HEK293 (cell line): ENCODE measurements at regions of chr3 and their contacts with region 1.

Region 1: DNA sequence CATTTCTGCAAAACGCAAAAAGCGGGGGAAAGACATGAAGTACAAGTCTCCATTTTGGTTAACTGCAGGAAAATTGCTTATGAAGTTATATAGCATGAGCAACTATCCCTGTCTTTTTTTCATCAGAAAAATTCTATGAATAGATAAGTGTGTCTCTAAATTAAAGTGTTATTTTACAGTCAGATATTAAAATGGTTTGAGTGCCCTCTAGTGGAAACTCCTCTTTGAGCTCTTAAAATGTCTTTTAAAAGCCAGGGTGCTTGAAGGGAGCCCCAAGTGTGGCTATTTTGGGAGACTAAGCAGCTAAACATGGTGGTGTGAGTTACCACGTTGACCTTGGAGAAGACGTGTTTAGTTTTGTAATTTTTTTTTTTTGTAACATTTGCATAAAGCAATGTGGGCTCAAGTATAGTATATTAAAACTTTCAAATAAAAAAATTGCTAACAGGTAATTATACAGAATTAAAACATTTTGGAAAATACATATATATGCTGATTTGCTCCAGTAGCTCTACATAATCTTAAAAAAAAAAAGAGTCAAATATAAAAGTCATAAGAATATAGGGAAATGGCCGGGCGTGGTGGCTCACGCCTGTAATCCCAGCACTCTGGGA is 77.2 kb downstream of the PPP2R3A start:
- H3K4me3 ChIP-seq: no peak overlapping the region
- H3K27ac ChIP-seq: no peak overlapping the region
- H3K4me1 ChIP-seq: no peaks in the 10 kb centered on the region
- CTCF ChIP-seq: no peak

Region 2: DNA sequence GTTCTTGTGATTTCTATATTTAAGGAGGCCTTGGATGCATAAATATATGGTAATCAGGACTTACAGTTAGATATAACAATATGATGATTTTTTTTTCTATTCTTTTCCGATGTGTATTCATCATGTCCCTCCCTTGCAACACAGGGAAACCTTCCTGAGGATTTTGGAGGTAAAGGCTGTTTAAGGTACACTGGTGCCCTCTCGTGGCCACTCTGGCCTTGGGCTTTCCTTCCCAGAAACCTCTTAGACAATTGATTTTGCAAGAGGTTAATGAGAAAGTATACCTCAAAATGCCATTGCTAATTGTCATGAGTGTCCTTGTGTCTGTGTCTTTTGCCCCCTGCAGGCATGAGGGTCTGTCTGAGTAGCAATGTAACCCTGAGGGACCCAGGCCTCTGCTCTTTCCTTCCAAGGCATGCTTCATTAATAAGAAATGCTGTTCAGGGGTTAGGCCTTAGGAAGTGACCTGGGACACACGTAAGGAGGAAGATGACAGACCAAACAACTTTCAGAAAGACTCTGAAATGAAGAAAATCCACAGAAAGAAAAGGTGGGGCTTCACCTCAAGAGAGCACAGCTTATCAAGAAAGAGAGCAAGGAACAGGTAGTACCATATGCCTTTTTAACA is 147.5 kb before region 1 on chr3:
- CTCF ChIA-PET with region 1: interaction called, 11 read pairs
- POLR2A ChIA-PET with region 1: no interaction called
- H3K4me3 ChIP-seq: no peak overlapping the region
- H3K27ac ChIP-seq: no peak overlapping the region
- H3K4me1 ChIP-seq: no peaks in the 10 kb centered on the region
- CTCF ChIP-seq: peak; percentile 49

Region 3: GRCh38 chr3:135918580-135918962 is 124.1 kb before region 1 on chr3:
- CTCF ChIA-PET with region 1: interaction called, 24 read pairs
- POLR2A ChIA-PET with region 1: no interaction called
- H3K4me3 ChIP-seq: no peak overlapping the region
- H3K27ac ChIP-seq: no peak overlapping the region
- H3K4me1 ChIP-seq: no peaks in the 10 kb centered on the region
- CTCF ChIP-seq: no peak

Region 4: GRCh38 chr3:136671921-136672320 is 629.2 kb after region 1 on chr3:
- CTCF ChIA-PET with region 1: no interaction called
- POLR2A ChIA-PET with region 1: no interaction called
- H3K4me3 ChIP-seq: no peak overlapping the region
- H3K27ac ChIP-seq: no peak overlapping the region
- H3K4me1 ChIP-seq: no peaks in the 10 kb centered on the region
- CTCF ChIP-seq: no peak